Right ventricle myocardium inferior (tissue), 1 donor: ENCODE measurements at regions of chr9 and their contacts with region 1.

Region 1: GRCh38 chr9:116163293-116164055 is 9.9 kb downstream of the PAPPA start:
- DNase-seq: no peak
- ATAC-seq: peak; percentile 38

Region 2: GRCh38 chr9:115978659-115979096 is 184.8 kb before region 1 on chr9:
- intact Hi-C with region 1: no loop called
- DNase-seq: no peak
- ATAC-seq: no peak

Region 3: GRCh38 chr9:116342071-116342470 is 178.6 kb after region 1 on chr9:
- intact Hi-C with region 1: loop called (anchors 10 kb)
- DNase-seq: no peak
- ATAC-seq: no peak